Activated CD8-positive, alpha-beta T cell treated with anti-CD3 and anti-CD28 coated beads for 36 hours (primary cell): ENCODE measurements at regions of chr7 and their contacts with region 1.

Region 1: GRCh38 chr7:28926871-28927597 is 31.1 kb downstream of the TRIL start:
- DNase-seq: peak; percentile 67
- ATAC-seq: peak; percentile 88
- H3K4me3 Mint-ChIP-seq: peak overlapping the region; percentile 78
- H3K27ac Mint-ChIP-seq: peak overlapping the region; percentile 51
- H3K4me1 Mint-ChIP-seq: peaks cover 20% of the 10 kb centered on the region
- H3K27me3 Mint-ChIP-seq: peaks cover 6% of the 10 kb centered on the region
- CTCF ChIP-seq: peak; percentile 75

Region 2: GRCh38 chr7:28904578-28905048 is 22.4 kb before region 1 on chr7:
- CTCF ChIA-PET with region 1: interaction called, 55 read pairs
- POLR2A ChIA-PET with region 1: no interaction called
- intact Hi-C with region 1: no loop called
- DNase-seq: no peak
- ATAC-seq: no peak
- H3K4me3 Mint-ChIP-seq: no peak overlapping the region
- H3K27ac Mint-ChIP-seq: no peak overlapping the region
- H3K4me1 Mint-ChIP-seq: no peaks in the 10 kb centered on the region
- H3K27me3 Mint-ChIP-seq: peaks cover 8% of the 10 kb centered on the region
- CTCF ChIP-seq: no peak

Region 3: DNA sequence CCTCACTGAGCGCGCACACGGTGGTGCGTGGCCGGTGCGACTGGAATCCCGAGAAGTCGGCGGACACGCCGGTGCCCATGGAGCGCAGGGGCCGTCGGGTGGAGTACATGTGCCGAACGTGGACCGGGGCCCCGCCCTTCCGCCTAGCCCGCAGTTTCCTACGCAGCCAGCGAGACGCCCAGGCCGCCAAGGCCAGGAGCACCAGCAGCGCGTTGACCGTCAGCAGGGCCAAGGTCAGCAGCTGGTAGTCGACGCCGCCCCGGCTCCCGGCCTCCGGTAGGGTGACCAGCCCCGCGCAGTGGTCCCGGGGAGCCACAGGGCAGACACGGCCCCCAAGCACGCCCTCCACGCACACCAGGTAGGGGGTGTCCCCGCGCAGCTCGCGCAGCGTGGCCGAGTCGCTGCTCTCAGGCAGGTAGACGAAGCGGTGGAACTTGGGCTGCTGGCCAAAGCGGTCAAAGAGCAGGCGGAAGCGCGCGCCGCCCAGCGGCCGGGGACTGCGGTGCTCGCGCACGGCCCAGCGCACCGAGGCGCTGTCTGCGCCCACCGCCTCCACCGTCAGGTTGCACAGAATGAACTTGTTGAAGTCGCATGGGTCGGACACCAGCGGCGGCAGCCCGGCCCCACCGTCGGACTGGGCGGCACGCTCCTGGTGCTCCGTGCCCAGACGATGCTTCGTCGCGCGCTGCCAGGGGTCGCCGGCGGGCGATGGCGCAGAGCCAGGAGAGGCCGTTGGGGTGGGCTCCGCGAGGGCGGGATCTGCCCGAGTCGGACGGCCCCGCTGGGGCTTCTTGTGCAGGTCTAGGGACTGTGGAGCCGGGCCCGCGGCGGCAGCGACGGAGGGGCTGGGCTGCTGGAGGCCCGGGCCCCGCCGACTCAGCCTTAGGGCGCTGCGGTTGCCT is 28.9 kb after region 1 on chr7:
- CTCF ChIA-PET with region 1: interaction called, 58 read pairs
- POLR2A ChIA-PET with region 1: no interaction called
- intact Hi-C with region 1: no loop called
- DNase-seq: peak; percentile 49
- ATAC-seq: peak; percentile 45
- H3K4me3 Mint-ChIP-seq: no peak overlapping the region
- H3K27ac Mint-ChIP-seq: no peak overlapping the region
- H3K4me1 Mint-ChIP-seq: peaks cover 9% of the 10 kb centered on the region
- H3K27me3 Mint-ChIP-seq: peaks cover 58% of the 10 kb centered on the region
- CTCF ChIP-seq: peak; percentile 44

Region 4: GRCh38 chr7:29091715-29092114 is 164.7 kb after region 1 on chr7:
- CTCF ChIA-PET with region 1: interaction called, 331 read pairs
- POLR2A ChIA-PET with region 1: no interaction called
- intact Hi-C with region 1: no loop called
- DNase-seq: peak; percentile 7
- ATAC-seq: peak; percentile 86
- H3K4me3 Mint-ChIP-seq: peak overlapping the region; percentile 59
- H3K27ac Mint-ChIP-seq: no peak overlapping the region
- H3K4me1 Mint-ChIP-seq: peaks cover 9% of the 10 kb centered on the region
- H3K27me3 Mint-ChIP-seq: peaks cover 7% of the 10 kb centered on the region
- CTCF ChIP-seq: no peak

Region 5: DNA sequence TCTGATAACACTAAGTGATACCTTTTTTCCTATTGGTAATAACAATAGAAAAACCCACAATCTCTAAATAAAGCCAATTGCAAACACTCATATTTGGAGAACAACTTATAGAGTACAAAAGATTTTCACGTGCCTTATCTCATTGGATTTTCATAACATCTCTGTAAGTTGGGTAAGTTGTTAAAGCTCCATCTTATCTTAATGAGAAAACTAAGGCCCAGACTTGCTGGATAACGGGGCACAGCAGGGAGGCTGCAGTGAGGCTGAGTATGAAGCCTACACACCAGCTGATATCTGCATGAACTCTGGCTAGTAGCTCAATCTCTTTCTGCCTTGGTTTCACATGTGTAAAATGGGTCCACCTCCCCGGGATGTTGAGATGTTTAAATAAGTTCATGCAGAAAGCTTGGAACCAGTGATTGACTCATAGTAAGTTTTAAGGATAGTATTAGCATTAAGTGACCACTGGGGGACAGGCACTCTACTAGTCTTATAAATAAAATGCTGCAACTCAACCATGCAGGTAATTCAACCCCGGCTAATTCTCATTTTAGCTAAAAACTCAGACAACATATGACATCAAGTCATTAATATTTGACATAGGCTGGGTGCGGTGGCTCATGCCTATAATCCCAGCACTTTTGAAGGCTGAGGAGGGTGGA is 192.6 kb after region 1 on chr7:
- CTCF ChIA-PET with region 1: interaction called, 15 read pairs
- POLR2A ChIA-PET with region 1: no interaction called
- intact Hi-C with region 1: no loop called
- DNase-seq: no peak
- ATAC-seq: no peak
- H3K4me3 Mint-ChIP-seq: no peak overlapping the region
- H3K27ac Mint-ChIP-seq: no peak overlapping the region
- H3K4me1 Mint-ChIP-seq: no peaks in the 10 kb centered on the region
- H3K27me3 Mint-ChIP-seq: peaks cover 8% of the 10 kb centered on the region
- CTCF ChIP-seq: no peak